ENCODE measurements at regions of chr19 and their contacts with region 1.

Region 1: DNA sequence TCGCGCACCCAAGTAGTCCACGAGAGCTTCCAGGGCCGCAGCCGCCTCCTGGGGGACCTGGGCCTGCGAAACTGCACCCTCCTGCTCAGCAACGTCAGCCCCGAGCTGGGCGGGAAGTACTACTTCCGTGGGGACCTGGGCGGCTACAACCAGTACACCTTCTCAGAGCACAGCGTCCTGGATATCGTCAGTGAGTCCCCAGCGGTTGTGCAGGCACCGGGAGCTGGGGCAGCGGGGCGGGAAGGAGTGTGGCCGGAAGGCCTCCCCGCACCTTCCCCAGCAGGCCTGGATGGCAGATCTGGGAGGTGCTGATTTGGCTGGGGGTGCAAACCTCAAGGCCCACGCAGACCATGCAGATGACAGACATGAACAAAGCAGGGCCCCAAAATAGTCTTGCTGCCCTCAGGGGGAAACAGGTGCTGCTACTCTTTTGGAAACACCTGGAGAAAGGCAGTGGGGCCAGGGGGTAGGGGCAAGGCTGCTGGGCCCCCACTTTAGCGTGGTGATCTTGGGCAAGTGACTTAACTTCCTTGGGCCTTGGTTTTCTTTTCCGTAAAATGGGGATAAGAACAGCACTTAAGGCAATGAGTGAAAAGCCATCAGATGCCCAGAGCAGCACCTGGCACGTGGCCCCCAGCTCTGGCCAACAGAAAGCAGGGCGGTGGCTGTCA is 4.0 kb downstream of the MAG start:
- DNase-seq: no peak

Region 2: GRCh38 chr19:34759218-34759917 is 536.6 kb before region 1 on chr19:
- intact Hi-C with region 1: no loop called
- DNase-seq: no peak

Region 3: DNA sequence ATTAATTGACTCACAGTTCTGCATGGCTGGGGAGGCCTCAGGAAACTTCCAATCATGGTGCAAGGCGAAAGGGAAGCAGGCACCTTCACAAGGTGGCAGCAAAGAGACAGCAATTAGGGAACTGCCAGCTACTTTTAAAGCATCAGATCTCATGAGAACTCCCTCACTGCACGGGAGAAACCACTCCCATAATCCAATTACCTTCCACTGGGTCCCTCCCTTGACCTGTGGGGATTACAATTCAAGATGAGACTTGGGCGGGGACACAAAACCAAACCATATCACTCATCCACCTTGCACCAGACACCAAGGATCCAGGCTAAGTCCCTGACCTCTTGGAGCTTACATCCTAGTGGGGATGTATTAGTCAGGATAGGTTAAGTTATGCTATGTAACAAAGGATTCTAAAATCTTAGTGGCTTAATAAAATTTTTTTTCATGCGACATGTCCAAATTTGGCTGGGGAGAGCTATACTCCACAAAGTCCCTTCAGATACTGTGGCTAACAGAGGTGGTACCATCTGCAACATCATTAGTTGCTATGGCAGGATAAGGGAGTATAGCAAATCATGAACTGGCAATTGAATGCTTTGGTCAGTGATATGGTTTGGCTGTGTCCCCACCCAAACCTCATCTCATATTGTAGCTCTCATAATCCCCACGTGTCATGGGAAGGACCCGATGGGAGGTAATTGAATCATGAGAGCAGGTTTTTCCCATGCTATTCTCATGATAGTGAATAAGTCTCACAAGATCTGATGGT is 59.1 kb before region 1 on chr19:
- intact Hi-C with region 1: loop called in 1 of 2 experiments (anchors 2 kb)
- DNase-seq: peak; percentile 24

Measured in posterior vena cava (tissue), 2 donors.